ENCODE measurements at regions of chr19 and their contacts with region 1.

Region 1: GRCh38 chr19:33156334-33156733 is 24.4 kb downstream of the WDR88 start:
- DNase-seq: no peak
- H3K4me3 Mint-ChIP-seq: no peak overlapping the region
- H3K27ac Mint-ChIP-seq: no peak overlapping the region
- H3K4me1 Mint-ChIP-seq: peaks cover 33% of the 10 kb centered on the region
- H3K27me3 Mint-ChIP-seq: peaks cover 2% of the 10 kb centered on the region

Region 2: DNA sequence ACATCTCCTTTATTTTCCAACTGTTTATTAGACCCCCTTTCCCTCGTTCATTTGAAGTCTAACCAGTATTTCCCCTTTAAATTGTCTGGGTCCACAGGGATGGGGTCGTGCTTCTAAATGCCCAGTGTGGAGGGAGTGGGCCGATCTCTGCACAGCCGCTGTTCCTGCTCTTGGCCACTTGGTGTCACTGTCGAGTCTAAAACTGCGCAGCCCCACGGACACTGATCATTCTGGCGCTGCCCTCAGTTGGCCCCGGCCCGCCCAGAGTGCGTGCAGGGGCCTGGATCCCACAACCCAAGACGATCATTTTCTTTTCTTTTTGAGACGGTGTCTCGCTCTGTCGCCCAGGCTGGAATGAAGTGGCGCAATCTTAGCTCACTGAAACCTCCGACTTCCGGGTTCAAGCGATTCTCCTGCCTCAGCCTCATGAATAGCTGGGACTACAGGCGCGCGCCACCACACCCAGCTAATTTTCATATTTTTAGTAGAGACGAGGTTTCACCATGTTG is 12.4 kb before region 1 on chr19:
- CTCF ChIA-PET with region 1: interaction called, 12 read pairs
- POLR2A ChIA-PET with region 1: interaction called, 3 read pairs
- DNase-seq: peak; percentile 66
- H3K4me3 Mint-ChIP-seq: no peak overlapping the region
- H3K27ac Mint-ChIP-seq: no peak overlapping the region
- H3K4me1 Mint-ChIP-seq: peaks cover 5% of the 10 kb centered on the region
- H3K27me3 Mint-ChIP-seq: peaks cover 5% of the 10 kb centered on the region

Region 3: DNA sequence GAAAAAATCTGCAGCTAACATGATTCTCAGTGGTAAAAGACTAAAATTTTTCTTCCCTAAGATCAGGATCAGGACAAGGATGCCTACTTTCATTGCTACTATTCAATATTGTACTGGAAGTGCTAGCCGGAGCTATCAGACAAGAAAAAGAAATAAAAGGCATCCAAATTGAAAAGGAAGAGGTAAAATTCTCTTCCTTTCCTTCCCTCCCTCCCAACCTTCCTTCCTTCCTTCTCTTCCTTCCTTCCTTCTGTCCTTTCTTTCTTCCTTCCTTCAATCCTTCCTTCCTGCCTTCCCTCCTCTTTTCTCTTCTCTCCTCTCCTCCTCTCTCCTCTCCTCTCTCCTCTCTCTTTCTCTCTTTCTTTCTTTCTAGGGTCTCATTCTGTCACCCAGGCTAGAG is 11.1 kb after region 1 on chr19:
- CTCF ChIA-PET with region 1: no interaction called
- POLR2A ChIA-PET with region 1: no interaction called
- DNase-seq: no peak
- H3K4me3 Mint-ChIP-seq: no peak overlapping the region
- H3K27ac Mint-ChIP-seq: no peak overlapping the region
- H3K4me1 Mint-ChIP-seq: peaks cover under 1% of the 10 kb centered on the region
- H3K27me3 Mint-ChIP-seq: no peaks in the 10 kb centered on the region